Calu3 (cell line): ENCODE measurements at regions of chr16 and their contacts with region 1.

Region 1: GRCh38 chr16:24504472-24505345 is 34.7 kb upstream of the RBBP6 start:
- DNase-seq: peak; percentile 71
- H3K4me3 Mint-ChIP-seq: no peak overlapping the region
- H3K27ac Mint-ChIP-seq: no peak overlapping the region
- H3K4me1 Mint-ChIP-seq: no peaks in the 10 kb centered on the region
- H3K27me3 Mint-ChIP-seq: peaks cover 68% of the 10 kb centered on the region
- CTCF ChIP-seq: peak; percentile 89

Region 2: GRCh38 chr16:23742766-23743165 is 761.9 kb before region 1 on chr16:
- CTCF ChIA-PET with region 1: no interaction called
- intact Hi-C with region 1: loop called (anchors 10 kb)
- DNase-seq: no peak
- H3K4me3 Mint-ChIP-seq: no peak overlapping the region
- H3K27ac Mint-ChIP-seq: no peak overlapping the region
- H3K4me1 Mint-ChIP-seq: no peaks in the 10 kb centered on the region
- H3K27me3 Mint-ChIP-seq: peaks cover 94% of the 10 kb centered on the region
- CTCF ChIP-seq: no peak

Region 3: GRCh38 chr16:23803591-23804123 is 701.1 kb before region 1 on chr16:
- CTCF ChIA-PET with region 1: interaction called, 4 read pairs
- intact Hi-C with region 1: loop called (anchors 5 kb)
- DNase-seq: peak; percentile 72
- H3K4me3 Mint-ChIP-seq: no peak overlapping the region
- H3K27ac Mint-ChIP-seq: no peak overlapping the region
- H3K4me1 Mint-ChIP-seq: peaks cover 12% of the 10 kb centered on the region
- H3K27me3 Mint-ChIP-seq: peaks cover 44% of the 10 kb centered on the region
- CTCF ChIP-seq: peak; percentile 54

Region 4: GRCh38 chr16:24041826-24042631 is 462.7 kb before region 1 on chr16:
- CTCF ChIA-PET with region 1: interaction called, 22 read pairs
- intact Hi-C with region 1: loop called (anchors 1 kb)
- DNase-seq: peak; percentile 83
- H3K4me3 Mint-ChIP-seq: no peak overlapping the region
- H3K27ac Mint-ChIP-seq: no peak overlapping the region
- H3K4me1 Mint-ChIP-seq: no peaks in the 10 kb centered on the region
- H3K27me3 Mint-ChIP-seq: peaks cover 60% of the 10 kb centered on the region
- CTCF ChIP-seq: peak; percentile 79

Region 5: GRCh38 chr16:24070851-24071250 is 433.9 kb before region 1 on chr16:
- CTCF ChIA-PET with region 1: interaction called, 27 read pairs
- intact Hi-C with region 1: loop called (anchors 2 kb)
- DNase-seq: peak; percentile 44
- H3K4me3 Mint-ChIP-seq: no peak overlapping the region
- H3K27ac Mint-ChIP-seq: no peak overlapping the region
- H3K4me1 Mint-ChIP-seq: no peaks in the 10 kb centered on the region
- H3K27me3 Mint-ChIP-seq: peaks cover 65% of the 10 kb centered on the region
- CTCF ChIP-seq: peak; percentile 47

Region 6: GRCh38 chr16:24253192-24253591 is 251.5 kb before region 1 on chr16:
- CTCF ChIA-PET with region 1: interaction called, 11 read pairs
- intact Hi-C with region 1: loop called (anchors 5 kb)
- DNase-seq: peak; percentile 27
- H3K4me3 Mint-ChIP-seq: no peak overlapping the region
- H3K27ac Mint-ChIP-seq: no peak overlapping the region
- H3K4me1 Mint-ChIP-seq: no peaks in the 10 kb centered on the region
- H3K27me3 Mint-ChIP-seq: peaks cover 81% of the 10 kb centered on the region
- CTCF ChIP-seq: peak; percentile 82

Region 7: GRCh38 chr16:24409049-24409448 is 95.7 kb before region 1 on chr16:
- CTCF ChIA-PET with region 1: interaction called, 4 read pairs
- intact Hi-C with region 1: loop called (anchors 1 kb)
- DNase-seq: peak; percentile 12
- H3K4me3 Mint-ChIP-seq: no peak overlapping the region
- H3K27ac Mint-ChIP-seq: no peak overlapping the region
- H3K4me1 Mint-ChIP-seq: no peaks in the 10 kb centered on the region
- H3K27me3 Mint-ChIP-seq: peaks cover 63% of the 10 kb centered on the region
- CTCF ChIP-seq: no peak

Region 8: DNA sequence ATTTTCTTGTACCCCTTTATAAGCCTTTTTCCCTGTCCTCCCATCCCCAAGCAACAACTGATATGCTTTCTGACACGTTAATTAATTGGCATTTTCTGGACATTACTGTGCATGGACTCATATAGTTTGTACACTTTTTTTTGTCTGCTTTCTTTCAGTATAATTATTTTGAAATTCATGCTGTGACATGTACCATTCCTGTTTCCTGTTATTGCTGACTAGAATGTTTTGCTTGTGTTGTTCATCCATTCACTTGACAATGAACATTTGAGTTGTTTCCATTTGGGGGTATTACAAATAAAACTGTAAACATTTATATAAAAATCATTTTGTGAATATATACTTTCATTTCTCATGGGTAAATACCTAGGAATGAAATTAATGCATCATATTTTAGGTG is 85.3 kb after region 1 on chr16:
- CTCF ChIA-PET with region 1: no interaction called
- intact Hi-C with region 1: no loop called
- DNase-seq: no peak
- H3K4me3 Mint-ChIP-seq: no peak overlapping the region
- H3K27ac Mint-ChIP-seq: no peak overlapping the region
- H3K4me1 Mint-ChIP-seq: peaks cover 8% of the 10 kb centered on the region
- H3K27me3 Mint-ChIP-seq: no peaks in the 10 kb centered on the region
- CTCF ChIP-seq: no peak